Activated naive CD4-positive, alpha-beta T cell treated with anti-CD3 and anti-CD28 coated beads for 36 hours (primary cell): ENCODE measurements at regions of chrX and their contacts with region 1.

Region 1: DNA sequence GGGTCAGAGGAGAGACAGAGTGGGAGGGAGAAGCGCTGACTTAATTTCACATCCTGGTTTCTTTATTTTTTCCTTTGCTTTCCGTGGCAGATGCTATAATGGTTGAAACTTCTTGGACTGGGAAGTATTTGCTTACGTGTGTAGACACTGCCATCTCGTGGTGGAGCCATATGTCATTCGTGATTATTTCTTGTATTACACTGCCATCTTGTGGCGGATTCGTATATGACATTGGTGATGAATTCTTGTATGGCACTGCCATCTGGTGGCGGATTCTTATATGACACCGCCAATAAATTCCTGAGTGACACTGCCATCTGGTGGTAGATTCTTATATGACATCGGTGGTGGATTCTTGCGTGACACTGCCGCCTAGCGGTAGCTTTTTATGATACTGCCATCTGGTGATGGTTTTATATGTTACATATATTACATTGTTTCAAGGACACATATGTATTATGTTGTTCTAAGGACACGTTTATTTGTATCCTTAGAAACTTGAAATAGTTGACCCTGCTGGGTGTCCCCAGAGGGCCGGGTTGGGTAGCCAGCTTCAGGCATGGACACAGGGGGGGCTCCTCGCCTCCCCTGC is 37.3 kb upstream of the CLCN4 start:
- DNase-seq: peak; percentile 74
- H3K4me3 Mint-ChIP-seq: no peak overlapping the region
- H3K27ac Mint-ChIP-seq: no peak overlapping the region
- H3K4me1 Mint-ChIP-seq: peaks cover 17% of the 10 kb centered on the region
- H3K27me3 Mint-ChIP-seq: no peaks in the 10 kb centered on the region

Region 2: DNA sequence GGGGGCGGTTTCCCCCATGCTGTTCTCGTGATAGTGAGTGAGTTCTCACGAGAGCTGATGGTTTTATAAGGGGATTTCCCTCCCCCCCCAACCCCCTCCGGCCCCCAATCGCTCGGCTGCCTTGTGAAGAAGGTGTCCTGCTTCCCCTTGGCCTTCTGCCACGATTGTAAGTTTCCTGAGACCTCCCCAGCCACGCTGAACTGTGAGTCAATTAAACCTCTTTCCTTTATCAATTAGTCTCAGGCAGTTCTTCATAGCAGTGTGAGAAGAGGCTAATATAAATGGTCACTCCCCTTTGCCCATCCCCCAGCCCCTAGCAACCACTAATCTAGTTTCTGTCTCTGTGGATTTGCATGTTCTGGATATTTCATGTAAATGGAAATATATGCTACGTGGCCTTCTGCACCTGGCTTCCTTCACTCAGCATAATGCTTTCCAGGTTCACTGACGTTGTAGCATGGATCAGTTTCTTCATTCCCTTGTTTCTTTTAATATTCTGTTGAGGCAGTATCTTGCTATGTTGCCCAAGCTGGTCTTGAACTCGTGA is 370.3 kb before region 1 on chrX:
- CTCF ChIA-PET with region 1: no interaction called
- intact Hi-C with region 1: no loop called
- DNase-seq: no peak
- H3K4me3 Mint-ChIP-seq: no peak overlapping the region
- H3K27ac Mint-ChIP-seq: no peak overlapping the region
- H3K4me1 Mint-ChIP-seq: peaks cover 16% of the 10 kb centered on the region
- H3K27me3 Mint-ChIP-seq: no peaks in the 10 kb centered on the region

Region 3: GRCh38 chrX:9873952-9874351 is 245.5 kb before region 1 on chrX:
- CTCF ChIA-PET with region 1: interaction called, 9 read pairs
- intact Hi-C with region 1: loop called (anchors 1 kb)
- DNase-seq: peak; percentile 62
- H3K4me3 Mint-ChIP-seq: no peak overlapping the region
- H3K27ac Mint-ChIP-seq: no peak overlapping the region
- H3K4me1 Mint-ChIP-seq: peaks cover 13% of the 10 kb centered on the region
- H3K27me3 Mint-ChIP-seq: peaks cover 3% of the 10 kb centered on the region

Region 4: DNA sequence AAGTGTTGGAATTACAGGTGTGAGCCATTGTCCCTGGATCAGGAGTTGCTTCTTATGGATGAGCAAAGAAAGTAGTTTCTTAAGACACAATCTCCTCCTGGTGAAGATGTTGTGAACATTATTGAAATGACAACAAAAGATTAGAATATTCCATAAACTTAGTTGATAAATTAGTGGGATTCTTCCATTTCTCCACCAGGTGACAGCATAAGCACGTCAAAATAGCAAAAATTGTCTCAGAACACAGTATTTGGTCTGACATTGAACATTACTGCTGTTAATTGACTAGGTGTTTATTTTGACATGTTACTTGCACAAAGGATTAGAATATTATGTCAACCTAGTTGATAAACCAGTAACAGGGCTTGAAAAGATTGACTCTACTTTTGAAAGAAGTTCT is 130.7 kb before region 1 on chrX:
- CTCF ChIA-PET with region 1: interaction called, 241 read pairs
- intact Hi-C with region 1: no loop called
- DNase-seq: no peak
- H3K4me3 Mint-ChIP-seq: no peak overlapping the region
- H3K27ac Mint-ChIP-seq: no peak overlapping the region
- H3K4me1 Mint-ChIP-seq: no peaks in the 10 kb centered on the region
- H3K27me3 Mint-ChIP-seq: no peaks in the 10 kb centered on the region

Region 5: GRCh38 chrX:10014462-10015356 is 104.8 kb before region 1 on chrX:
- CTCF ChIA-PET with region 1: interaction called, 32 read pairs
- intact Hi-C with region 1: no loop called
- DNase-seq: peak; percentile 71
- H3K4me3 Mint-ChIP-seq: peak overlapping the region; percentile 67
- H3K27ac Mint-ChIP-seq: peak overlapping the region; percentile 30
- H3K4me1 Mint-ChIP-seq: peaks cover 35% of the 10 kb centered on the region
- H3K27me3 Mint-ChIP-seq: peaks cover 4% of the 10 kb centered on the region

Region 6: GRCh38 chrX:10083809-10084208 is 35.7 kb before region 1 on chrX:
- CTCF ChIA-PET with region 1: interaction called, 5 read pairs
- intact Hi-C with region 1: loop called (anchors 2 kb)
- DNase-seq: no peak
- H3K4me3 Mint-ChIP-seq: no peak overlapping the region
- H3K27ac Mint-ChIP-seq: no peak overlapping the region
- H3K4me1 Mint-ChIP-seq: peaks cover 34% of the 10 kb centered on the region
- H3K27me3 Mint-ChIP-seq: no peaks in the 10 kb centered on the region